ENCODE measurements at regions of chr19 and their contacts with region 1.

Region 1: GRCh38 chr19:10228920-10229319 is 2.2 kb downstream of the S1PR2 start:
- DNase-seq: peak; percentile 57
- H3K4me3 Mint-ChIP-seq: peak overlapping the region; percentile 63
- H3K27ac Mint-ChIP-seq: peak overlapping the region; percentile 25
- H3K4me1 Mint-ChIP-seq: peaks cover 13% of the 10 kb centered on the region
- H3K27me3 Mint-ChIP-seq: no peaks in the 10 kb centered on the region

Region 2: GRCh38 chr19:10194500-10195289 is 34.2 kb before region 1 on chr19 and contains the start of gene DNMT1:
- CTCF ChIA-PET with region 1: interaction called, 10 read pairs
- POLR2A ChIA-PET with region 1: no interaction called
- DNase-seq: peak; percentile 98
- H3K4me3 Mint-ChIP-seq: peak within 1 kb of the TSS; percentile 84
- H3K27ac Mint-ChIP-seq: peak within 1 kb of the TSS; percentile 90
- H3K4me1 Mint-ChIP-seq: peaks cover 50% of the 10 kb centered on the region
- H3K27me3 Mint-ChIP-seq: no peaks in the 10 kb centered on the region
- total RNA-seq, gene DNMT1: 375 to 404 TPM

Region 3: DNA sequence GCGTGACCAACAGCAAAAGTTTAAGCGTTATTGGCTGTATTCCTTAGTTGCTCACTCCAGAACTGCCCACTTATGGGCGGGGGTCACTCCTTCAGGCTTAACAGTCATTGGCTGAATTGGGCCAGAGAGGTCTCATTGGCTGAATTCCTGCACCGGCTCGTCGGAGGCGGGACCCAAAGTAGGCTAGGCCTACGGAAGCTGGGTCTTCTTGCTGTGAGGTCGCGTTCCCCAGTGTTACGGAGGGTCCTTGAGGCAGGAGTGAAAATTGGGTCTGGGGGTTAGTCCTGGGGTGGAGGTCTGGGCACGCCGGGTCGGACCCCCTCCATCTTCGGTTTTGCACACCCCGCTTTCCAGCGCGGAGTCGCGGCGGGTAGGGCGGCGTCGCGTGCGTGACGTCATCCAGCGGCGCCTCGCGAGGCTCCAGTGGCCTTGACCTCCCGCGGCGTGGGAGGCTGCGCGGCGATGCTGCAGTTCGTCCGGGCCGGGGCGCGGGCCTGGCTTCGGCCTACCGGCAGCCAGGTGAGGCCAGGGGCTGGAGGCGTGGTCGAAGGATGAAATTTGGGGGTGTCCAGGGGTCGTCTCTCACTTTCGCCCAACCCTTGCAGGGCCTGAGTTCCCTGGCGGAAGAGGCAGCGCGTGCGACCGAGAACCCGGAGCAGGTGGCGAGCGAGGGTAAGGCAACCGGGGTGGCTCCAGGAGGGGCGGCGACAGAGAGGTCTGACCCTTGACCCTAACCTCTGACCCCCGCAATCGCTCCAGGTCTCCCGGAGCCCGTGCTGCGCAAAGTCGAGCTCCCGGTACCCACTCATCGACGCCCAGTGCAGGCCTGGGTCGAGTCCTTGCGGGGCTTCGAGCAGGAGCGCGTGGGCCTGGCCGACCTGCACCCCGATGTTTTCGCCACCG is 23.1 kb after region 1 on chr19 and contains the start of gene MRPL4:
- CTCF ChIA-PET with region 1: interaction called, 18 read pairs
- POLR2A ChIA-PET with region 1: interaction called, 3 read pairs
- DNase-seq: peak; percentile 99
- H3K4me3 Mint-ChIP-seq: peak within 1 kb of the TSS; percentile 96
- H3K27ac Mint-ChIP-seq: peak within 1 kb of the TSS; percentile 99
- H3K4me1 Mint-ChIP-seq: peaks cover 31% of the 10 kb centered on the region
- H3K27me3 Mint-ChIP-seq: no peaks in the 10 kb centered on the region
- total RNA-seq, gene MRPL4: 58.7 to 67.9 TPM

Measured in activated CD4-positive, alpha-beta T cell treated with anti-CD3 and anti-CD28 coated beads, Interleukin-2, amount 10 ng/mL, durations not matched to agents 7 days and 5 days (primary cell).